ENCODE measurements at regions of chr14 and their contacts with region 1.

Region 1: DNA sequence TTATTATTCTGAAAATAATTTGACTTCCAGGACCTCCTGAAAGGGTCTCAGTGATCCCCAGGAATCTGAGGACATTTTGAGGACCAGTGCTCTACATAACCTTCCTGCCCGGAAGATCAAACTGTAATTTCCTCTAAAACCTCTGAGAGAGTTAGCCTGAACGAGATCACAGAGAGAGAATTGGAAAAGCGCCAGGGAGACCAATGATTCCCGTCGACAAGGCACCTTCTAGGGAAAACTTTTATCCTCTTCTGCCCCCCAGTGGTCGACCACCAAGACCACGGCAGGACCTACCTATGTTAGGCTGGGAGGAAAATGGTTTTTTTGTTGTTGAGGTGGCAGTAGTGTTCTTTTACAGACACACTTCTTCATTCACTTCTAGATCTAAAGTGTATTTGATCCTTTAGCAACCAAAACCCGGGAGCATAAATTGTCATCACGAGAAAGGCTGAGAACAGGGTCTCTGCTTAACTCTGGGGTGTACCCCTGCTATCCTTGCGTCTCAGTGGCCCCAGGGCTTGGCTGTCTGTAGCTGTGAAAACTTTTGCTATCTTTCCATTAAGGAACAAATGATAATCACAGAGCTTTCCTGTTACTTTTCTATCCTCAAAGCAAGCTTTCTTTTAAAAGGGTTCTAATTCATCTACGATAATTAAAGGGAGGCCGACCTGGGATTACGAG is 62.9 kb upstream of the NID2 start:
- H3K4me3 ChIP-seq: no peak overlapping the region
- H3K27ac ChIP-seq: no peak overlapping the region
- H3K4me1 ChIP-seq: no peaks in the 10 kb centered on the region
- CTCF ChIP-seq: peak; percentile 59; the same call in 1 of the 2 replicates

Region 2: GRCh38 chr14:51979088-51979709 is 152.6 kb before region 1 on chr14:
- CTCF ChIA-PET with region 1: interaction called, 13 read pairs
- POLR2A ChIA-PET with region 1: no interaction called
- H3K4me3 ChIP-seq: no peak overlapping the region
- H3K27ac ChIP-seq: no peak overlapping the region
- H3K4me1 ChIP-seq: no peaks in the 10 kb centered on the region
- CTCF ChIP-seq: peak; percentile 29; the same call in 1 of the 2 replicates

Region 3: GRCh38 chr14:51996148-51996746 is 135.5 kb before region 1 on chr14:
- CTCF ChIA-PET with region 1: interaction called, 19 read pairs
- POLR2A ChIA-PET with region 1: no interaction called
- H3K4me3 ChIP-seq: no peak overlapping the region
- H3K27ac ChIP-seq: no peak overlapping the region
- H3K4me1 ChIP-seq: no peaks in the 10 kb centered on the region
- CTCF ChIP-seq: no peak